Sigmoid colon (tissue), 7 donors: ENCODE measurements at regions of chr1 and their contacts with region 1.

Region 1: DNA sequence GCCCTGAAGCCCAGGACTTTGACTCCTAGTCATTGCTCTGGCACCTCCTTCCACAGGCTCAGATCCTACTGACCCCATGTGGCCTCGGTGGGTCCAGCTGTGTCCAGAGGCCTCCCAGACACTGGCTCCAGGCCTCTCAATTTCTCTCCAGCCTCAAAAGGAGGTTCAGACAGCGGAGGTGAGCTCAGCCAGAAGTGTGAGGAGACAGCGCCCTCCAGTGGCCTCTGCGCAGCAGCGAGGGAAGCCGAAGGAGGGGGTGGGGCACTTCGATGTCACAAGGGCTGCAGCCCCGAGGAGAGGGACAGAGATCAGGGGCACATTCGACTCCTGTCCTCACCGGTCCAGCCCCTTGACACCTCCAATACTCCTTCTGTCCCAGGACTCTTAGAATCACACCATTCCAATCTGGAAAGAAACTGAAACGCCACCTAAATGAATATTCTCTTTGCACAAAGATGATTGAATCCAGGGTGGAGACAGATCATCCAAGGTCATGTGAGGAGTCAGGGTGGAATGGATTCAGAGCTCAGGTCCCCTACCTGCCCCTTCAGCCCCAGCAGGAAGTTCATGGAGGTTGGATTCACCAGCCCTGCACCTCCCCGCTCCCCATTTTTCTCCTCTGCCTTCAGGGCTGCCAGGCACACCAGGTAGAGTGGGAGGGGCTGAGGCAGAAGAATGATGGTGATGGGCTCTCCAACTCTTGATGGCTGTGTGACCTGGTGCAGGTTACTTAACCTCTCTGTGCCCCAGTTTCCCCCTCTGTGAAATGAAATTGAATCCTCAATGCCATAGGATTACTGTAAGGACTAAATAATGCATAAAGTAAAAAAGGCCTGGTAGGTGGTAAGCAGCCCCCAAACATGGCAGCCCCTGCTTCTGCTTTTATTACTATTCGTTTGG is 34.8 kb upstream of the ZBTB40 start:
- DNase-seq: no peak
- H3K4me3 ChIP-seq: no peak overlapping the region
- H3K27ac ChIP-seq: no peak overlapping the region
- H3K4me1 ChIP-seq: peaks cover 0 to 13% (median 2%) of the 10 kb centered on the region in 4 donors
- H3K27me3 ChIP-seq: peaks cover 0 to 27% (median 0%) of the 10 kb centered on the region in 3 donors
- CTCF ChIP-seq: peak; percentile 17 to 67 (median 64)
- EP300 ChIP-seq: no peak
- POLR2A ChIP-seq: no peak

Region 2: GRCh38 chr1:22105611-22106207 is 311.1 kb before region 1 on chr1:
- intact Hi-C with region 1: loop called (anchors 5 kb)
- DNase-seq: no peak
- H3K4me3 ChIP-seq: no peak overlapping the region
- H3K27ac ChIP-seq: no peak overlapping the region
- H3K4me1 ChIP-seq: peaks cover 0 to 77% (median 49%) of the 10 kb centered on the region in 4 donors
- H3K27me3 ChIP-seq: no peaks in the 10 kb centered on the region
- CTCF ChIP-seq: peak; percentile 54 to 85 (median 80)
- EP300 ChIP-seq: no peak
- POLR2A ChIP-seq: no peak

Region 3: GRCh38 chr1:22163137-22163536 is 253.7 kb before region 1 on chr1:
- intact Hi-C with region 1: no loop called
- DNase-seq: no peak
- H3K4me3 ChIP-seq: no peak overlapping the region
- H3K27ac ChIP-seq: no peak overlapping the region
- H3K4me1 ChIP-seq: no peaks in the 10 kb centered on the region
- H3K27me3 ChIP-seq: no peaks in the 10 kb centered on the region
- CTCF ChIP-seq: no peak
- EP300 ChIP-seq: no peak
- POLR2A ChIP-seq: no peak

Region 4: DNA sequence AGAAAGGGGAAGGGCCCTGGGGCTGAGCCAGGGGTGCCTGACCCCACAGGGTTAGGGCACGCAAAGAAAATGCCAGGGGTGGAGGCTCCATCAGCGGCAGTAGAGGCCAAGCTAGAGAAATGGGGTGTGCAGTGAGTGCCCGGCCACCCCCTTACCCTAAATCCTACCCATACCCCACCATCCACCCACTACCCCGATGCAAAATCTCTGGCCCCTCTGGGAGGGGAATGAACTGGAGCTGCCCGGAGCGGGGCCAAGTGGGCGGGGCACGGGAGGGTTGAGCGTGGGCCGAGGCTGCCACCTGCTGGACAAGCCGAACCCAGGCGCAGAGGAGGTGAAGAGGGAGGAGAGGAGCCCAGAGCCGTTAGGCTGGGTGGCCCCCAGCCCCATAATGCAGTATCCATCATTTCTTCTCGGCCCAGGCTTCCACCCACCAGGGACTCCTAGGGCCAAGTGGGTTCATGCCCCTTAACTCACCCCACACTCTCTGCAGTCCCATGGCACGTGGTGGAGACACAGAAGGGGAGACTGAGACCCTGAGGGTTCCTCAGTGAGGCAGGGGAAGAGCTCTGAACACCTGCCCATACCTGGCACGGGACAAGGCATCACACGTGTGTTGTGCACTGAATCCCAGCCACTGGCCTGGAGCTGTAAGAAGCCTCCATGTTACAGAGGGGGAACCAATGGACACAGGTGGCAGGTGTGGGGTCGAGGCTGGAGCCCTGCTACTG is 225.3 kb after region 1 on chr1:
- intact Hi-C with region 1: loop called (anchors 1 kb)
- DNase-seq: peak; percentile 88
- H3K4me3 ChIP-seq: no peak overlapping the region
- H3K27ac ChIP-seq: no peak overlapping the region
- H3K4me1 ChIP-seq: peaks cover 0 to 8% (median 0%) of the 10 kb centered on the region in 4 donors
- H3K27me3 ChIP-seq: peaks cover 0 to 7% (median 0%) of the 10 kb centered on the region in 3 donors
- CTCF ChIP-seq: peak; percentile 73 to 91 (median 88)
- EP300 ChIP-seq: no peak
- POLR2A ChIP-seq: no peak

Region 5: DNA sequence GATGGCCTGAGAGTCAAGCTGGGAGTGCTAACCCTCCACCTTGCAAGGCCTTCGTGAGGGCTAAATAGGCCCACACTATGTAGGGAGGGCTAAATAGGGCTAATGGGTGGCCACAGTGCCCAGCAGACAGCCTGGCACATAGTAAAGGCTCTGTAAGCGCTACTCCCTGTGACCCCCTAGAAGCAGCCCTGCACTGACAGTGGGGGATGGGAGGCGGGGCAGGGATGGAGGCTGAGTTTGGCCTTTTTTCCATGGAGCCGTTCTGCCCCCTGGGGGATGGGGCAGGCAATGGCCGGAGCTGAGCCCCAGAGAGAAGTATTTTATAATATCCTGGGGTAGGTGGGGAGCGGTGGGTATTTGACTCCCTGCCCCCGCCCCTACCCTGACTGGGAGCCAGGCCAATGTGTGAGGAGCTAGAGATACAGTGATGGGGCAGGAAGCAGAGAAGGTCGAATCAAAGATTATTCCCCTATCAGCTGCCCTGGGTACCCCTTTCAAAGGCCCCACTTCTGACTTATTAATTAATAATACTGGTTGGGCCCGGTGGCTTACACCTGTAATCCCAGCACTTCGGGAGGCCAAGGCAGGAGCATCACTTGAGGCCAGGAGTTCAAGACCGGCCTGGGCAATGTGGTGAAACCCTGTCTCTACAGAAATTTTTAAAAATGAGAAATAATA is 513.6 kb after region 1 on chr1:
- intact Hi-C with region 1: loop called (anchors 10 kb)
- DNase-seq: peak; percentile 63
- H3K4me3 ChIP-seq: no peak overlapping the region
- H3K27ac ChIP-seq: no peak overlapping the region
- H3K4me1 ChIP-seq: no peaks in the 10 kb centered on the region
- H3K27me3 ChIP-seq: peaks cover 0 to 5% (median 0%) of the 10 kb centered on the region in 3 donors
- CTCF ChIP-seq: peak in 3 of 4 experiments; percentile 59 to 60 (median 60)
- EP300 ChIP-seq: no peak
- POLR2A ChIP-seq: no peak